HepG2 (cell line): ENCODE measurements at regions of chr9 and their contacts with region 1.

Region 1: GRCh38 chr9:128020692-128021091 is 39.9 kb upstream of the EEIG1 start:
- DNase-seq: peak; percentile 19
- ATAC-seq: peak; percentile 57
- H3K4me3 ChIP-seq: no peak overlapping the region
- H3K27ac ChIP-seq: no peak overlapping the region
- H3K4me1 ChIP-seq: peaks cover 53% of the 10 kb centered on the region
- H3K27me3 ChIP-seq: peaks cover under 1 to 9% of the 10 kb centered on the region in 2 experiments; a peak in 2 of 5 replicates
- CTCF ChIP-seq: peak; percentile 69
- EP300 ChIP-seq: no peak
- POLR2A ChIP-seq: no peak
- RAD21 ChIP-seq: peak; percentile 18; the same call in 1 of the 2 replicates

Region 2: DNA sequence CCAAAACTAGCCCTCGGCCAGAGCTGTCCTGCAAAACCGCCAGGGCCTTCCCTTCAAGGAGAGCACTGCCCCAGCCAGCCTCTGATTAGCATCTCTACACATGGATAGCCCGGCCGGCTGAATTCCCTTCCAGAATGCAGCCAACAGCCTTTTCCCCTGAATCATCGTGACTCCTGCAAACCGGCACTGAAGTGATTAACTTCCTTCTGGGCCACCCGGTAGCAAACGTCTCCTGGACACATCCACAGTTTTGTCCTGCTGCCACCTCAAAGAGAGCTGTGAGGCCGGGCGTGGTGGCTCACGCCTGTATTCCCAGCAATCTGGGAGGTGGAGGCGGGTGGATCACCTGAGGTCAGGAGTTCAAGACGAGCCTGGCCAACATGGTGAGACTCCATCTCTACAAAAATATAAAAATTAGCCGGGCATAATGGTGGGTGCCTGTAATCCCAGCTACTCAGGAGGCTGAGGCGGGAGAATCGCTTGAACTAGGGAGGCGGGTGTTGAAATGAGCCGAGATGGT is 18.9 kb before region 1 on chr9:
- CTCF ChIA-PET with region 1: no interaction called
- POLR2A ChIA-PET with region 1: no interaction called
- in situ Hi-C with region 1: no loop called
- intact Hi-C with region 1: loop called (anchors 1 kb)
- DNase-seq: no peak
- ATAC-seq: peak; percentile 50
- H3K4me3 ChIP-seq: no peak overlapping the region
- H3K27ac ChIP-seq: no peak overlapping the region
- H3K4me1 ChIP-seq: peaks cover 65% of the 10 kb centered on the region
- H3K27me3 ChIP-seq: peaks cover 0 to 4% of the 10 kb centered on the region in 2 experiments; a peak in 1 of 5 replicates
- CTCF ChIP-seq: no peak
- EP300 ChIP-seq: no peak
- POLR2A ChIP-seq: no peak
- RAD21 ChIP-seq: no peak

Region 3: GRCh38 chr9:128081056-128081455 is 60.4 kb after region 1 on chr9:
- CTCF ChIA-PET with region 1: no interaction called
- POLR2A ChIA-PET with region 1: no interaction called
- in situ Hi-C with region 1: no loop called
- intact Hi-C with region 1: no loop called
- DNase-seq: no peak
- ATAC-seq: peak; percentile 77
- H3K4me3 ChIP-seq: no peak overlapping the region
- H3K27ac ChIP-seq: peak overlapping the region; percentile 3
- H3K4me1 ChIP-seq: peaks cover 45% of the 10 kb centered on the region
- H3K27me3 ChIP-seq: no peaks in the 10 kb centered on the region
- CTCF ChIP-seq: no peak
- EP300 ChIP-seq: no peak
- POLR2A ChIP-seq: no peak
- RAD21 ChIP-seq: no peak